ENCODE measurements at regions of chr1 and their contacts with region 1.

Region 1: GRCh38 chr1:169711469-169712281 is at the start of gene SELL:
- DNase-seq: peak; percentile 73
- ATAC-seq: peak; percentile 96
- H3K4me3 ChIP-seq: peak within 1 kb of the TSS; percentile 29 to 55
- H3K27ac ChIP-seq: peak within 1 kb of the TSS; percentile 13; the same call in 1 of the 2 replicates
- H3K4me1 ChIP-seq: peaks cover 2 to 12% of the 10 kb centered on the region in 2 experiments; a peak in 3 of 4 replicates
- H3K27me3 ChIP-seq: no peaks in the 10 kb centered on the region
- CTCF ChIP-seq: peak; percentile 70 to 84 (median 82); a peak in 5 of 6 replicates
- POLR2A ChIP-seq: no peak
- RAD21 ChIP-seq: peak; percentile 78
- total RNA-seq, gene SELL: 4.1 TPM

Region 2: DNA sequence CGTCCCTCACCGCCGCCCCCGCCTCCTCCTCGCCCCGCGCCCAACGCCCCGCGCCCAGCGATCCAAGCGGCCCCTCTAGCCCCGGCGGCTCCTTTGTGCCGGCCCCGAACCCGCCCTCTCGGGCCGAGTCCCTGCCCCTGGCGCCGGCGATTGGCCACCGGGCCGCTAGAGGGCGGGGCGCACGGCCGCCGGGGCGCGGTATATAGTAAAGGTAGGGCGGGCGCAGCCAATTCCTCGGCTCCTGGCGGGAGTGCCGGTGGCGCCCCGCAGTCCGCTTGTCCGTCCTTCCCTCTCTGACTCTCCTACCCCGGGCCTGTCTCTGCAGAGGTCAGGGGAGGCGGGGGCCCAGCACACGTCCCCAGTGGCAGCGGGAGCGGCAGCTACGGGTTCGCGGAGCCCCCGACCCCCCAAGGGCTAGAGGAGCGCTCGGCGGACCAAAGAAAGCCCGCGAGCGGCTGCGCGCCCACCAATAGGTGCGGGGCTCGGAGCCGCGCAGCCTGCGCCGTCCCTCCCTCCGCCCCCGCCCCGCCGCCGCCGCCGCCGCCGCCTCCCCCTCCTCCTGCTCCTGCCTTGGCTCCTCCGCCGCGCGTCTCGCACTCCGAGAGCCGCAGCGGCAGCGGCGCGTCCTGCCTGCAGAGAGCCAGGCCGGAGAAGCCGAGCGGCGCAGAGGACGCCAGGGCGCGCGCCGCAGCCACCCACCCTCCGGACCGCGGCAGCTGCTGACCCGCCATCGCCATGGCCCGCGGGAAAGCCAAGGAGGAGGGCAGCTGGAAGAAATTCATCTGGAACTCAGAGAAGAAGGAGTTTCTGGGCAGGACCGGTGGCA is 605.4 kb before region 1 on chr1 and contains the start of gene ATP1B1:
- CTCF ChIA-PET with region 1: no interaction called
- POLR2A ChIA-PET with region 1: no interaction called
- RAD21 ChIA-PET with region 1: no interaction called
- intact Hi-C with region 1: no loop called
- DNase-seq: peak; percentile 64
- ATAC-seq: peak; percentile 86
- H3K4me3 ChIP-seq: peak within 1 kb of the TSS; percentile 72 to 84
- H3K27ac ChIP-seq: peak within 1 kb of the TSS; percentile 85
- H3K4me1 ChIP-seq: peaks cover 50 to 65% of the 10 kb centered on the region in 2 experiments
- H3K27me3 ChIP-seq: no peaks in the 10 kb centered on the region
- CTCF ChIP-seq: 0 out of 6 replicates have a peak, but pooled peaks of 1 of the 3 experiments have one; percentile 16
- POLR2A ChIP-seq: peak; percentile 90
- RAD21 ChIP-seq: no peak
- total RNA-seq, gene ATP1B1: 48.6 TPM

Region 3: DNA sequence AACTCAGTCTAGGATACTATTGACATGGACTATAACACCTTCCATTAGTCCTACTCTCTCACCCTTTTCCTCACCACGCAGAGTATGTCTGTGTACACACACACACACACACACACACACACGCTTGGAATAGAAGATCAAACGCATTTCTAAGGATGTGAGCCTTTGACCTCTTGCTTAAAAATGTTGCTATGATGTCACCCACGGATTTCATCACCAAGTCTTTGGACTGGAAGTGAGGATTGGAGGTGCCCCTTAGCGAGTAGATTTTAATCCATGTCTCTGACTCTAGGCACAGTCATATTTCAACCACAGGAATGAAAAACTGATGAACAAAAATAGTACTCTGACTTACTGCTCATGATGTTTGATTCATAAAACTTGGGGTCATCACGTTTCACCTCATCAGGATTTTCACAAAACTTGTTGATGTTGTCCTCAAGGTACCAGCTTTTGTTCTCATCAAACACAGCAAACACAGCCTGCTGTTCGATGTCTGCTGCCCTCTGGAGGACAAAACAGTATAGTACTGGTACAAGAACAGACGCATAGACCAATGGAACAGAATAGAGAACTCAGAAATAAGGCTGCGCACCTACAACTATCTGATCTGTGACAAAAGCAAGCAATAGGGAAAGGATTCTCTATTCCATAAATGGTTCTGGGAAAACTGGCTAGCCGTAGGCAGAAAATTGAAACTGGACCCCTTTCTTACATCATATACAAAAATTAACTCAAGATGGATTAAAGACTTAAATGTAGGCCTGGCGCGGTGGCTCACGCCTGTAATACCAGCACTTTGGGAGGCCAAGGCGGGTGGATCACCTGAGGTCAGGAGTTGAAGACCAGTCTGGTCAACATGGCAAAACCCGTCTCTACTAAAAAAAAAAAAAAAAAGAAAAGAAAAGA is 165.3 kb before region 1 on chr1:
- CTCF ChIA-PET with region 1: interaction called, 6 read pairs
- POLR2A ChIA-PET with region 1: no interaction called
- RAD21 ChIA-PET with region 1: no interaction called
- intact Hi-C with region 1: loop called (anchors 5 kb)
- DNase-seq: peak; percentile 65
- ATAC-seq: peak; percentile 89
- H3K4me3 ChIP-seq: no peak overlapping the region
- H3K27ac ChIP-seq: no peak overlapping the region
- H3K4me1 ChIP-seq: no peaks in the 10 kb centered on the region
- H3K27me3 ChIP-seq: no peaks in the 10 kb centered on the region
- CTCF ChIP-seq: peak; percentile 77 to 84 (median 82)
- POLR2A ChIP-seq: no peak
- RAD21 ChIP-seq: peak; percentile 92

Region 4: GRCh38 chr1:169601093-169601881 is 110.4 kb before region 1 on chr1:
- CTCF ChIA-PET with region 1: interaction called, 16 read pairs
- POLR2A ChIA-PET with region 1: no interaction called
- RAD21 ChIA-PET with region 1: no interaction called
- intact Hi-C with region 1: loop called (anchors 1 kb)
- DNase-seq: no peak
- ATAC-seq: peak; percentile 67
- H3K4me3 ChIP-seq: no peak overlapping the region
- H3K27ac ChIP-seq: no peak overlapping the region
- H3K4me1 ChIP-seq: no peaks in the 10 kb centered on the region
- H3K27me3 ChIP-seq: peaks cover 5% of the 10 kb centered on the region; the same call in 1 of the 2 replicates
- CTCF ChIP-seq: peak; percentile 25 to 59 (median 50); a peak in 4 of 6 replicates
- POLR2A ChIP-seq: no peak
- RAD21 ChIP-seq: peak; percentile 73

Region 5: DNA sequence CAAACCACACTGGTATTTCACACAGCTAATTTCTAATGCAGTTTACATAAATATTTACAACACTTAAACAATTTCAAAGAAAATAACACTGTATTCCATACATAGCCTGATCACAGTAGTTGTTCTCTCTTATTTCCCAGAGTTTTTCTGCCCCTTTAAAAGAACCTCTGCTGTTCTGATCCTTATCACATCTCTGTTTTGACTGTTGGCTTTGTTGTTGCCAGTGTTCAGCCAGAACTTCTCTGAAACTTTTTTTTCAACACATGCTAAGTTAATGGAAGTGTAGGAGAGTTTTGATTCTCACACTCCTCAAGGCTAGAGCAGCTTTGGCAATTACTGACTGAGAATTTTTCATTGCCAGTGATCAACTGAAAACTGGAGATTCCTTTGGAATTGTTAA is 11.1 kb after region 1 on chr1:
- CTCF ChIA-PET with region 1: interaction called, 11 read pairs
- POLR2A ChIA-PET with region 1: no interaction called
- RAD21 ChIA-PET with region 1: no interaction called
- intact Hi-C with region 1: no loop called
- DNase-seq: no peak
- ATAC-seq: no peak
- H3K4me3 ChIP-seq: no peak overlapping the region
- H3K27ac ChIP-seq: no peak overlapping the region
- H3K4me1 ChIP-seq: no peaks in the 10 kb centered on the region
- H3K27me3 ChIP-seq: no peaks in the 10 kb centered on the region
- CTCF ChIP-seq: no peak
- POLR2A ChIP-seq: no peak
- RAD21 ChIP-seq: no peak

Region 6: GRCh38 chr1:169746550-169746949 is 34.9 kb after region 1 on chr1:
- CTCF ChIA-PET with region 1: no interaction called
- POLR2A ChIA-PET with region 1: no interaction called
- RAD21 ChIA-PET with region 1: no interaction called
- intact Hi-C with region 1: no loop called
- DNase-seq: no peak
- ATAC-seq: no peak
- H3K4me3 ChIP-seq: no peak overlapping the region
- H3K27ac ChIP-seq: no peak overlapping the region
- H3K4me1 ChIP-seq: peaks cover 0 to 3% of the 10 kb centered on the region in 2 experiments; a peak in 1 of 4 replicates
- H3K27me3 ChIP-seq: no peaks in the 10 kb centered on the region
- CTCF ChIP-seq: no peak
- POLR2A ChIP-seq: no peak
- RAD21 ChIP-seq: no peak

Region 7: GRCh38 chr1:169809370-169810095 is 97.9 kb after region 1 on chr1:
- CTCF ChIA-PET with region 1: no interaction called
- POLR2A ChIA-PET with region 1: no interaction called
- RAD21 ChIA-PET with region 1: no interaction called
- intact Hi-C with region 1: loop called (anchors 5 kb)
- DNase-seq: peak; percentile 21
- ATAC-seq: peak; percentile 68
- H3K4me3 ChIP-seq: no peak overlapping the region
- H3K27ac ChIP-seq: no peak overlapping the region
- H3K4me1 ChIP-seq: no peaks in the 10 kb centered on the region
- H3K27me3 ChIP-seq: no peaks in the 10 kb centered on the region
- CTCF ChIP-seq: peak in 2 of 3 experiments; percentile 60 to 62; a peak in 3 of 6 replicates
- POLR2A ChIP-seq: no peak
- RAD21 ChIP-seq: peak; percentile 77

Measured in HCT116 (cell line).